AG04450 (cell line): ENCODE measurements at regions of chr22 and their contacts with region 1.

Region 1: GRCh38 chr22:17742527-17742902 is 31.8 kb downstream of the BID start:
- DNase-seq: peak; percentile 23
- H3K4me3 ChIP-seq: no peak overlapping the region
- H3K27ac ChIP-seq: no peak overlapping the region
- H3K27me3 ChIP-seq: no peaks in the 10 kb centered on the region
- CTCF ChIP-seq: peak; percentile 85

Region 2: GRCh38 chr22:17518406-17518805 is 224.1 kb before region 1 on chr22:
- CTCF ChIA-PET with region 1: no interaction called
- POLR2A ChIA-PET with region 1: no interaction called
- DNase-seq: no peak
- H3K4me3 ChIP-seq: no peak overlapping the region
- H3K27ac ChIP-seq: no peak overlapping the region
- H3K27me3 ChIP-seq: no peaks in the 10 kb centered on the region
- CTCF ChIP-seq: no peak

Region 3: GRCh38 chr22:17559188-17559587 is 183.3 kb before region 1 on chr22:
- CTCF ChIA-PET with region 1: interaction called, 30 read pairs
- POLR2A ChIA-PET with region 1: no interaction called
- DNase-seq: no peak
- H3K4me3 ChIP-seq: no peak overlapping the region
- H3K27ac ChIP-seq: no peak overlapping the region
- H3K27me3 ChIP-seq: peaks cover 13% of the 10 kb centered on the region
- CTCF ChIP-seq: no peak

Region 4: GRCh38 chr22:17672417-17672991 is 70.0 kb before region 1 on chr22:
- CTCF ChIA-PET with region 1: interaction called, 13 read pairs
- POLR2A ChIA-PET with region 1: interaction called, 5 read pairs
- DNase-seq: no peak
- H3K4me3 ChIP-seq: no peak overlapping the region
- H3K27ac ChIP-seq: no peak overlapping the region
- H3K27me3 ChIP-seq: no peaks in the 10 kb centered on the region
- CTCF ChIP-seq: no peak

Region 5: DNA sequence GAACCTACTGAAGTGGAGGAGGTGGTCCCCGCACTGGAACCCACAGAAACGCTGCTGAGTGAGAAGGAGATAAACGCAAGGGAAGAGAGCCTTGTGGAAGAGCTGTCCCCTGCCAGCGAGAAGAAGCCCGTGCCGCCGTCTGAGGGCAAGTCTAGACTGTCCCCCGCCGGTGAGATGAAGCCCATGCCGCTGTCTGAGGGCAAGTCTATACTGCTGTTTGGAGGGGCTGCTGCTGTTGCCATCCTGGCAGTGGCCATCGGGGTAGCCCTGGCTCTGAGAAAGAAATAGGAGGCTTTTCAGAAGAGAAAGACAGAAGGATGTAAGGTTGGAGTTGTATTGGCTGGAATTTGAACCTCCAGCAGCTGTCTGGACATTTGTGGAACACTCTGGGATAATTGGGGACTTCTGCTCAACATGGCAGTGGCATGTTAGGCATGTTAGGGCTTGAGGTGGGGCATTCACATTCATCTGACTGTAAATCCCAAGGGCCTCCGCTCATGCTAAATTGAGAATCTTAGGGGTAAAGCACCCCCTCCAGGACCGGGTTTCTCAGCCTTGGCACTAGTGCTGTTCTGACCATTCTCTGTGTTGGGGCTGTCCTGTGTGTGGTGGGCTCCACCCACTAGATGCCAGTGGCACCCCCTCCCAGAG is 15.1 kb before region 1 on chr22:
- CTCF ChIA-PET with region 1: interaction called, 25 read pairs
- POLR2A ChIA-PET with region 1: no interaction called
- DNase-seq: no peak
- H3K4me3 ChIP-seq: no peak overlapping the region
- H3K27ac ChIP-seq: peak overlapping the region; percentile 89
- H3K27me3 ChIP-seq: no peaks in the 10 kb centered on the region
- CTCF ChIP-seq: no peak

Region 6: GRCh38 chr22:17773606-17774205 is 31.2 kb after region 1 on chr22:
- CTCF ChIA-PET with region 1: interaction called, 30 read pairs
- POLR2A ChIA-PET with region 1: no interaction called
- DNase-seq: no peak
- H3K4me3 ChIP-seq: peak overlapping the region; percentile 73
- H3K27ac ChIP-seq: peak overlapping the region; percentile 11
- H3K27me3 ChIP-seq: no peaks in the 10 kb centered on the region
- CTCF ChIP-seq: no peak

Region 7: DNA sequence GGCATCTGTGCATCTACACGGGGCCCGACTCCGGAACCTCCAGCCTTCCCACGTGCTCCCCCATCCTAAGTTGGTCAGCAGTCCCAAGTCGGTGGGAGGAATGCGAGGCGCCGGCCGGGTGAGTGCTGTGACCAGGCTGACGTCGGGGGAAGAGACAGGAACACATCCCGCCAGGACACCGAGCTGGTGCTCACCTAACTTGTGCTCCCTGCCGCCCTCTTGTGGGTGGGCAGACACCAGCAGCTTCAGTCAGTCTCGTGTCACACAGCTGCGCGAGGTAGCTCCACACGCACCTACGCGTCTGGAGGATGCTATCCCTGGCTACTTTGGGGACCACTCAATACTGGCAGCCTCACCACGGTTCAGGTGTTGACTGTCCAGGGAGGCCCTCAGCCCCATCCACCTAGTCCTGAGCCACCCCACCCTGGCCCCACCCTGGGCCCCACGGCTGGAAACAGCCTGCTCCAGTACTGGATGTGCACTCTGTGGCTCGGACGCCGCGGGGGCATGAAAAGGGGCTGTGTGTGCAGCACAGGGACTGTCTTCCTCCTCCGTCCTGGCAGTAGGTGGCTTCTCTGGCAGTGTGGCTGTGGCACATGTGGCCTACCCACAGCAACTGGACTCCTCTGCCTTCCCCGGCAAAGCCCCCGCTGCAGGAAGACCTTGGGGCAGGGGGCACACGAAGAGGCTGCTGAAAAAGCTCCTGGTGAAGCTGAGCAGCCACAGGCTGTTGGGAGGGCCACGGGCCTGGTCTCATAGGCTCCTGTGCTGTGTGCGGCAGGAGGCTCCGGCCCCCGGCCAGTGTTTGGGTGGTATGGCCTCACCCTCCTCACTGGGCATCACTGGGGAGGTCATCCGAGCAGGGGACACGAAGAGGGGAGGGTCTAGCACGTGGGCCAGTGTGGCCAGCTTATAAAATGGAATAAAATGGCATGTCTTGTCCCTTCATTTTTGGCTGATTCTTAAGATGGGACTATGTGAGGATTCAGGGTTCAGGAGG is 43.0 kb after region 1 on chr22:
- CTCF ChIA-PET with region 1: interaction called, 24 read pairs
- POLR2A ChIA-PET with region 1: no interaction called
- DNase-seq: no peak
- H3K4me3 ChIP-seq: no peak overlapping the region
- H3K27ac ChIP-seq: no peak overlapping the region
- H3K27me3 ChIP-seq: no peaks in the 10 kb centered on the region
- CTCF ChIP-seq: peak; percentile 47

Region 8: GRCh38 chr22:17815789-17816188 is 73.3 kb after region 1 on chr22:
- CTCF ChIA-PET with region 1: no interaction called
- POLR2A ChIA-PET with region 1: no interaction called
- DNase-seq: no peak
- H3K4me3 ChIP-seq: no peak overlapping the region
- H3K27ac ChIP-seq: no peak overlapping the region
- H3K27me3 ChIP-seq: no peaks in the 10 kb centered on the region
- CTCF ChIP-seq: no peak